Dendritic cell treated with granulocyte-macrophage colony-stimulating factor and Interleukin-4, amounts not matched to agents 40 ng/mL and 50 ng/mL, for 4 days (primary cell): ENCODE measurements at regions of chr11 and their contacts with region 1.

Region 1: GRCh38 chr11:75896843-75897419 is 81.9 kb downstream of the UVRAG start:
- H3K4me3 Mint-ChIP-seq: no peak overlapping the region
- H3K27ac Mint-ChIP-seq: no peak overlapping the region
- H3K4me1 Mint-ChIP-seq: peaks cover 65% of the 10 kb centered on the region
- H3K27me3 Mint-ChIP-seq: no peaks in the 10 kb centered on the region

Region 2: DNA sequence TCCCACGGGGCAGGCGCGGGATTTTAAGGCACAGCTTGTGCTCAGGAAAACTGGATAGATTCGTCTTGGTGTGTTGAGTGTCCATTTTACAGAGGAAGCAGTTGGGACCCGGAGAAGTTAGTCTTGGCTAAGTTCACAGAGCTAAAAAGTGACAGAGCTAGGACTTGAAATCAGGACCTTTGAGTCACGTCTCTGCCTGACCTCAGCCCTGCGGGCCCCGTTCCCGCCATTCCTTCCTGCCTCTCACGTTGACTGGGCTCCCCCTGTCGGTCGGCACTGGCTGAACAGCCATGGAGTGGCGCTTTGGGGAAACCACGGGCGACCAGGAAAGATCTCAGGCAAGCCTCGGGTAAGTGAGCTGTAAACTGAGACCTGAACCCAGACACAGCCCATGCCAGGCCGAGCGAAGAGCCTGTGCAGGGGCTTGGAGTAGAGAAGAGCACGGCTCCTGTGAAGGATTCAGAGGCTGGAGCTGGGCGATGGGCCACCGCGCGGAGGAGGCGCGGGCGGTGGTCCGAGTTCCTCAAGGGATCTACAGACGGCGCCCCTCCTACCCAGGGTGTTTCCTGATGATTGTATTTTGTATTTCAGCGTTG is 255.3 kb after region 1 on chr11:
- intact Hi-C with region 1: loop called (anchors 1 kb)
- H3K4me3 Mint-ChIP-seq: peak overlapping the region; percentile 78
- H3K27ac Mint-ChIP-seq: peak overlapping the region; percentile 56
- H3K4me1 Mint-ChIP-seq: peaks cover 25% of the 10 kb centered on the region
- H3K27me3 Mint-ChIP-seq: peaks cover 30% of the 10 kb centered on the region

Region 3: GRCh38 chr11:76318744-76319384 is 421.9 kb after region 1 on chr11:
- intact Hi-C with region 1: loop called (anchors 10 kb)
- H3K4me3 Mint-ChIP-seq: no peak overlapping the region
- H3K27ac Mint-ChIP-seq: no peak overlapping the region
- H3K4me1 Mint-ChIP-seq: peaks cover 29% of the 10 kb centered on the region
- H3K27me3 Mint-ChIP-seq: peaks cover 42% of the 10 kb centered on the region